T-cell (primary cell): ENCODE measurements at regions of chr22 and their contacts with region 1.

Region 1: GRCh38 chr22:23767673-23768548 is at the start of gene CHCHD10:
- DNase-seq: peak; percentile 46 to 79 (median 66)
- ATAC-seq: peak; percentile 67 to 80 (median 76)
- H3K4me3 ChIP-seq: peak within 1 kb of the TSS; percentile 74 to 81
- H3K4me3 Mint-ChIP-seq: peak within 1 kb of the TSS; percentile 78 to 84 (median 82)
- H3K27ac ChIP-seq: peak within 1 kb of the TSS; percentile 13
- H3K27ac Mint-ChIP-seq: peak within 1 kb of the TSS; percentile 46 to 75
- H3K4me1 ChIP-seq: peaks cover 25 to 78% of the 10 kb centered on the region in 2 experiments
- H3K4me1 Mint-ChIP-seq: peaks cover 40 to 61% (median 46%) of the 10 kb centered on the region in 3 donors
- H3K27me3 ChIP-seq: peaks cover 0 to 12% of the 10 kb centered on the region in 2 experiments
- H3K27me3 Mint-ChIP-seq: no peaks in the 10 kb centered on the region
- total RNA-seq, gene CHCHD10: 26.1 to 66.3 (median 63.2) TPM

Region 2: DNA sequence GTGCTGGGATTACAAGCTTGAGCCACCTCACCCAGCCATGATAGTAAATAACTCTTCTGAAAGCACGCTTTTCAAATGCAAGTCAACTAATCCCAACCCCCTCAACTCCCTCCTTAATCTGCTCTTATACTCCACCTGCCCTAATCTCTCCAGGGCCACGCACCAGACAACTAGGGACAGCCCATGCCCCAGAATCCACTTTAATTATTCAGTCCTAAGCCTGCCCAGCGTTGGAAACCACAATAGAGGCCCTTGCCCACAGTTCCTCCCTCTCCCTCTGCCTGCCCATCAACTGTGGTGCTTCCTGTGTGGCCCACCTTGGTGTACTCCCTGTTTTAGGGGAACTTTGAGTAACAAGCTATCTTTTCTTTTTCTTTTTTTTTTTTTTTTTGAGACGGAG is 11.0 kb before region 1 on chr22:
- CTCF ChIA-PET with region 1: interaction called, 5 read pairs
- POLR2A ChIA-PET with region 1: interaction called in 1 of 2 experiments, 10 read pairs
- DNase-seq: no peak
- ATAC-seq: no peak
- H3K4me3 ChIP-seq: no peak overlapping the region
- H3K4me3 Mint-ChIP-seq: no peak overlapping the region
- H3K27ac ChIP-seq: no peak overlapping the region
- H3K27ac Mint-ChIP-seq: no peak overlapping the region
- H3K4me1 ChIP-seq: peaks cover 0 to under 1% of the 10 kb centered on the region in 2 experiments
- H3K4me1 Mint-ChIP-seq: peaks cover 0 to 10% (median 0%) of the 10 kb centered on the region in 3 donors
- H3K27me3 ChIP-seq: no peaks in the 10 kb centered on the region
- H3K27me3 Mint-ChIP-seq: no peaks in the 10 kb centered on the region